ENCODE measurements at regions of chr10 and their contacts with region 1.

Region 1: GRCh38 chr10:27446091-27446918 is 57.8 kb upstream of the RAB18 start:
- DNase-seq: no peak
- ATAC-seq: peak in 1 of 2 donors; percentile 49

Region 2: GRCh38 chr10:27399871-27400270 is 46.4 kb before region 1 on chr10:
- intact Hi-C with region 1: no loop called
- DNase-seq: no peak
- ATAC-seq: no peak

Region 3: GRCh38 chr10:27661514-27662286 is 215.4 kb after region 1 on chr10:
- intact Hi-C with region 1: loop called in 1 of 2 experiments (anchors 5 kb)
- DNase-seq: no peak
- ATAC-seq: no peak

Region 4: GRCh38 chr10:28179006-28179742 is 732.9 kb after region 1 on chr10:
- intact Hi-C with region 1: loop called in 1 of 2 experiments (anchors 5 kb)
- DNase-seq: no peak
- ATAC-seq: peak; percentile 53 to 81

Region 5: DNA sequence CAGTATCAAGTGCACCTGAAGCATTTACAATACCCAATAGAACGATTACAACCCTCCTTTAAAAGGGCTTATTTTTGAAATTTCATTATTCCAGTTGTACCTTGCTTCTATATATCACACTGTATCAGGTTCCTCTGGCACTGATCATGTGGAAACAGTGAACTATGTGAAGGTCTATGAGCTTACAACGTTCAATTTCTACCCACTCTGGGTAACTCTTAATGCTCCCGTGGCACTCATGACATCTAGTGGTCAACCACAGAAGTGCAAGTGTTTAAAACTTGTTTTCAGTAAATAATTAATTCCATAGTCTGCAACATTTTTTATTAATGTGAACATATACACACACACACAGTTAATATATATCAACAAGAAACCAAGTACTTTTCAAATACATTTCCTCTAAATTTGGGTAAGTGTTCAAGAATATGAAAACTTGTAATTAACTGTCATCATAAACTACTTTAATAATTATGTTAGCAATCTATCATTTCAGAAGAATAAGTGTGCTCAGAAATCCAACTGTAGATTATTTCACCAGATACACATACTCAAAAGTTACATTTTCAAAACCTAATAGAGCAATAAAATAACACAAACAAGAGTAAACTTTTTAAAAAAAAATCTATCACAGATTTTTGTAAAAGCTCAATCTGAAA is 795.6 kb after region 1 on chr10:
- intact Hi-C with region 1: loop called in 1 of 2 experiments (anchors 5 kb)
- DNase-seq: no peak
- ATAC-seq: peak; percentile 79 to 82

Measured in left cardiac atrium (tissue), 4 donors.